Vagina (tissue), 2 donors: ENCODE measurements at regions of chr17 and their contacts with region 1.

Region 1: GRCh38 chr17:81481073-81481799 is 31.4 kb downstream of the ACTG1 start:
- DNase-seq: no peak
- H3K4me3 ChIP-seq: peak overlapping the region; percentile 35 to 36
- H3K27ac ChIP-seq: no peak overlapping the region
- H3K4me1 ChIP-seq: peaks cover 39% of the 10 kb centered on the region
- H3K27me3 ChIP-seq: no peaks in the 10 kb centered on the region
- CTCF ChIP-seq: no peak
- POLR2A ChIP-seq: no peak

Region 2: DNA sequence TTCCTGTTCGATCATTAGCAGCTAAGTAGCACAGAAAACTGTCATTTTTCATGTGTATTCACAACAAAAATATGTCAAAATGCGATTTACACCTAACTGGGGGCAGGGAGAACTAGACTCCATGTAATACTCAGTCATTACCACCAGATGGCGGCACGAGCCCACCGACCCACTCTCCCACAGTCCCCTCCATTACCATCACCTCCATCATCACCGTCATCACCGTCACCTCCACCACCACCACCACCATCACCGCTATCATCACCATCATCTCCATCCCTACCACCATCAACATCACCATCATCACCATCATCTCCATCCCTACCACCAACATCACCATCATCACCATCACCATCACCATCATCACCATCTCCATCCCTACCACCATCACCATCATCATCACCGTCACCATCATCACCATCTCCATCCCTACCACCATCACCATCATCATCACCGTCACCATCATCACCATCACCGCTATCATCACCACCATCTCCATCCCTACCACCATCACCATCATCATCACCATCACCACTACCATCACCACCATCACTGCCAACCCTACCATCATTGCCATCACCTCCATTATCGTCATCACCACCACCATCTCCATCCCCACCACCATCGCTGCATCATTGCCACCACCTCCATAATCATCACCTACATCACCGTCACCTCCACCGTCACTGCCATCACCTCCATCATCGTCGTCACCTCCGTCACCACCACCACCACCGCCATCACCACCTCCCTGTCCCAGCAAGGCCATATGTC is 227.7 kb before region 1 on chr17:
- intact Hi-C with region 1: loop called (anchors 2 kb)
- DNase-seq: no peak
- H3K4me3 ChIP-seq: no peak overlapping the region
- H3K27ac ChIP-seq: no peak overlapping the region
- H3K4me1 ChIP-seq: peaks cover 24% of the 10 kb centered on the region
- H3K27me3 ChIP-seq: no peaks in the 10 kb centered on the region
- CTCF ChIP-seq: peak; percentile 82 to 97 (median 90)
- POLR2A ChIP-seq: no peak

Region 3: DNA sequence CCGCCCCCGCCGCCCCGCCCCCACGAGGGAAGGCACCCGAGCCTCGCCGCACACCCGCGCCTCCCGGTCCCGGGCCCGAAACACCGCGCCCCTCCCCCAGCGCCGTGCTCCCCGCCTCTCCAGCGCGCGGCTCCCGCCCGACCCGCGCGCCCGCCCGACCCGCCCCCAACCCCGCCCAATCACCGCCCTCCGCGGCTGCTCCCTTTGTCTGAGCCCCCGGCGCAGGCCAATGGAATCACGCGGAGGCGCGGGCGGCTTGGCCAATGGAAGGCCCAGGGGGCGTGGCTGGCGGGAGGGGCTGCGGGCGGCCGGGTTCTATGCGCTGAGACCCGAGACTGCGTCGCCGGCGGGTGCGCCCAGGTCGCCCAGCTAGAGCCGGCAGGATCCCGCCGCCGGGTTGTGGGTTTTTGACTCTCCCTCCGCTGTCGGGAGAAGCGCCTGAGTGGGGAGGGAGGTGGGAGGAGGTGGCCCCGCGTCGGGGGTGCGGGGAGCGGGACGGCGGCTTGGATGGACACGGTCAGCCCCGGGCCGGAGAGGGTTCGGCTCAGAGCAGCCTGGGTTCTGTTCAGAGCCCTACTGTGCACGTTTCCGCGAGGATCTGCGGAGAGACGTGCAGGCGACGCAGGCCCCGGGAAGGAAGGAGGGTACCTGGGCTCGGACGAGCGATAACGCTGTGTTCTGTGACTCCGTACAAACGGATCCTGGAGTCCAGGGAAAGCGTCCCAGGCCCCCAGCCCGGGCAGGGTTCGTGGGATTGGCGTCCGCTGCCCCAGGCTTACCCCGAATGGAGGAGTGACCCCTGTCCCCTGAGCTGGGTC is 134.9 kb before region 1 on chr17:
- intact Hi-C with region 1: loop called (anchors 2 kb)
- DNase-seq: peak in 1 of 2 donors; percentile 98
- H3K4me3 ChIP-seq: peak overlapping the region; percentile 74 to 78
- H3K27ac ChIP-seq: peak overlapping the region; percentile 75
- H3K4me1 ChIP-seq: peaks cover 48% of the 10 kb centered on the region
- H3K27me3 ChIP-seq: no peaks in the 10 kb centered on the region
- CTCF ChIP-seq: no peak
- POLR2A ChIP-seq: peak in 1 of 2 donors; percentile 74

Region 4: GRCh38 chr17:81397314-81398175 is 83.7 kb before region 1 on chr17:
- intact Hi-C with region 1: loop called (anchors 2 kb)
- DNase-seq: no peak
- H3K4me3 ChIP-seq: peak overlapping the region; percentile 76 to 78
- H3K27ac ChIP-seq: peak overlapping the region; percentile 95
- H3K4me1 ChIP-seq: peaks cover 50% of the 10 kb centered on the region
- H3K27me3 ChIP-seq: no peaks in the 10 kb centered on the region
- CTCF ChIP-seq: no peak
- POLR2A ChIP-seq: no peak